Cardiac septum (tissue), 1 donor: ENCODE measurements at regions of chr2 and their contacts with region 1.

Region 1: DNA sequence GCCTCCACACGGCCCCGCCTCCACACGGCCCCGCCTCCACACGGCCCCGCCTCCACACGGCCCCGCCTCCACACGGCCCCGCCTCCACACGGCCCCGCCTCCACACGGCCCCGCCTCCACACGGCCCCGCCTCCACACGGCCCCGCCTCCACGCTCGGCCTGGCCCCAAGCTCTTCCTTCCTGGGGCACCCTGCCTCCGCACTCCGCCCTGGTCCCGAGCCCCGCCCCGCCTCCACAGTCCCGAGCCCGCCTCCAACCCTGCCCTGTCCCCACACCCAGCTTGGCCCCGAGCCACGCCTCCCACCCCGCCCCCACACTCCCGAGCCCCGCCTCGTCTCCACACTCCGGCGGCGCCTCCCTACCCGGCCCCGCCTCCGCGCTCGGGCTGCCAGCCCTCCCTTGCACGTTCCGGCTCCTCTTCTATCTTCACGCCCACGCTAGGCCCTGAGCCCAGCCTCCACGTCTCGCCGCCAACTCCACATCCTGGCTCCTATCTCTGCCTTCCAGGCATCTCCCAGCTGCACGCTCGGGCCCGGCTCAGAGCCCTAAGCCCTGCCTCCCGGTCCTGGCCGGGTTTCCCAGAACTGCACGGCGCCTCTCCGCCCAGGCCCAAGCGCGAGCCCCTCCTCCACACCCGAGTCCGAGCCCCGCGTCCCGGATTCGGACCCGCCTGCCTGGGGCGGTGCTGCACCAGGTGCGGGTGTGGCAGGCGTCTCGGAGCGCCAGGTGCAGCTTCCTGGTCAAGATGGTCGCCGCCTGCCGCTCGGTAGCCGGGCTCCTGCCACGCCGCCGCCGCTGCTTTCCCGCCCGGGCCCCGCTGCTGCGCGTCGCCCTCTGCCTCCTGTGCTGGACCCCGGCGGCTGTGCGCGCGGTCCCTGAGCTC is at the start of gene TMEM87B:
- DNase-seq: peak; percentile 99
- total RNA-seq, gene TMEM87B: 11.0 TPM

Region 2: DNA sequence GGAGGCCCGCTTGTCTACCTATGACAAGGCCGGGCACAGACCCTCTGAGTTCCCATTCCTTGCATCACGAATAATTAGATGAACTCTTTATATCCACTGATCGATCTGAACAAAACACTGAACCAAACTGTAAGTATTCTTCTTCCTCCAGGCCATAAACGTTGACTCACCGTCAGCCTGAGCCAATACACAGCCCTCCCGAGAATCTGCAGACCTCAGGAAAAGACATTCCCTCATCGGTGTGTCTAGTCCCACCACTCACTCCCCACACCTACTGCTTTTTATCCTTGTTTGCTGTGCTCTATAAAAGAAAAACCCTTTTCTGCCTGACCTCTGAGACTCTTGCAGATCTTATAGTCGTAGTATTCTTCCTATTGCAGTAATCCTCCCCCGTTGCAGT is 41.0 kb after region 1 on chr2:
- intact Hi-C with region 1: no loop called
- DNase-seq: no peak

Region 3: GRCh38 chr2:112147382-112148168 is 92.5 kb after region 1 on chr2:
- intact Hi-C with region 1: loop called (anchors 5 kb)
- DNase-seq: no peak

Region 4: GRCh38 chr2:112275306-112275886 is 220.3 kb after region 1 on chr2 and contains the start of gene ZC3H6:
- intact Hi-C with region 1: loop called (anchors 1 kb)
- DNase-seq: peak; percentile 100
- total RNA-seq, gene ZC3H6: 19.1 TPM

Region 5: DNA sequence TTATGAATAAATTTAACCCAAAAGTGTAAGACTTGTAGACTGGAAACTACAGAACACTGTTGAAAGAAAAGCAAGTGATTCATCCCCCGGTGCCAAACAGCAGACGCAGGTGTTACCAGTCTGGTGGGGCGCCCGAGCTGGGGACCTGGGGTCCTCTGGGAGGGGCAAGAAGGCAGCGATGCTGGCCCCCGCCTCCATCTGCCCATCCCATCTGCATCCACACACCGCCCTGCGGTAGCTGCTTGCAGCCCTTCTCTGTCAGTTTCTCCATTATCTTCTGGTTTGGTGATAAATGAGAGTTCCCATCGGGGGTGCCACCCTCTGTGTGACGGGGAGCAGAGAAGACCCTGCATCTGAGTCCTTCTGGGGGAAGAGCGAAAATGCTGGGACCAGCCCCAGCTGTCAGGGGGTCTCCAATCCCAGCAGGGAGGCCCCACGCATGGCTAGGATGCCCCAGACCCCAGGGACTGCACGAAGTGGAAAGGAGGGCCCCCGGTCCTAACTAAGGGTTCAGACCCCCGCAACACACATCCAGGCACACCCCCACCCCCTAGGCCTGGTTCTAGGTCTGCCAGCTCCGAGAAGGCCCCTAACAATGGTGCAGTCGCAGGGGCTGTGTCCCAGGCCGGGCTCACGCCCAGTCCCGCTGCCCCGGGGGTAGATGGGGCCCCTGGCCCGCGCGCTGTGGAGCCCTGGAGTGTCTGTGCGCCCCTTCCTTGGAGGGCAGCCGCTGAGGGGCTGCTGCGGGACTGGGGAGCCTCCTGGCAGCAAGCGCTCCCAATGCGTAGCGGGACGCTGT is 379.0 kb after region 1 on chr2:
- intact Hi-C with region 1: loop called (anchors 10 kb)
- DNase-seq: no peak